PC-3 (cell line): ENCODE measurements at regions of chr15 and their contacts with region 1.

Region 1: DNA sequence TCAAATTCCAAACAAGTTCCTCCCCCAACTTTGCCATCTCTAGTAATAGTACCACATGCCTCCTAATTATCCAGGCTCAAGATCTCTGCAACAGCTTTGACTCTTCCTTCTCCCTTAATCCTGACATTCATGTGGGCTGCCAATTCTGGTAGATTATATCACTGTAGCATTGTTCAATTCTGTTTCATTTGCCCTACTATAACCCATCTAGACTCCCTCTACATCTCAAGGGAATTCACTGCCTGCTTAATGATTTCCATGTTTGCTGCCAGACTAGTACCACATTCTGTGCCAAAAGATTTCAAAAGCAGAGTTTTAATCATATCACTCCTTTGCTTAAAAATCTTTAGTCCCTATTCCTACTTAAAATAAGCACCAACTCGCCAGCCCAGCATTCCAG is 34.6 kb upstream of the PPIB start:
- DNase-seq: no peak
- ATAC-seq: no peak
- H3K4me3 ChIP-seq: no peak overlapping the region
- H3K27ac ChIP-seq: no peak overlapping the region
- H3K4me1 ChIP-seq: no peaks in the 10 kb centered on the region
- H3K27me3 ChIP-seq: no peaks in the 10 kb centered on the region
- CTCF ChIP-seq: no peak

Region 2: DNA sequence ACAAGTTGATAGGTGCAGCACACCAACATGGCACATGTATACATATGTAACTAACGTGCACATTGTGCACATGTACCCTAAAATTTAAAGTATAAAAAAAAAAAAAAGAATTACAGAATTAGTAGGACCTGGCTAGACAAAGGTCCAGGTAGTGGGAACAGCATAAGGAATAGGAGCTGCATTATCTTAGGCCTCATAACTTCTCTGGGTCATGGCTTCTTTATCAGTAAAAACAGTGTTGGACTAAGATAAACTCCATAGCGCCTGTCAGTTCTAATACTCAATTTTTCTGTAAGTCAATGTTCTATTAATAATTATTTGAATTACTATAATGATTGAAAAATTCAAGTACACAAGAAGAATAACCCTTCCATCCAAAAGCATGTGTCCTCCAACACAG is 462.0 kb before region 1 on chr15:
- CTCF ChIA-PET with region 1: no interaction called
- POLR2A ChIA-PET with region 1: no interaction called
- intact Hi-C with region 1: no loop called
- DNase-seq: no peak
- ATAC-seq: no peak
- H3K4me3 ChIP-seq: no peak overlapping the region
- H3K27ac ChIP-seq: no peak overlapping the region
- H3K4me1 ChIP-seq: no peaks in the 10 kb centered on the region
- H3K27me3 ChIP-seq: no peaks in the 10 kb centered on the region
- CTCF ChIP-seq: no peak

Region 3: DNA sequence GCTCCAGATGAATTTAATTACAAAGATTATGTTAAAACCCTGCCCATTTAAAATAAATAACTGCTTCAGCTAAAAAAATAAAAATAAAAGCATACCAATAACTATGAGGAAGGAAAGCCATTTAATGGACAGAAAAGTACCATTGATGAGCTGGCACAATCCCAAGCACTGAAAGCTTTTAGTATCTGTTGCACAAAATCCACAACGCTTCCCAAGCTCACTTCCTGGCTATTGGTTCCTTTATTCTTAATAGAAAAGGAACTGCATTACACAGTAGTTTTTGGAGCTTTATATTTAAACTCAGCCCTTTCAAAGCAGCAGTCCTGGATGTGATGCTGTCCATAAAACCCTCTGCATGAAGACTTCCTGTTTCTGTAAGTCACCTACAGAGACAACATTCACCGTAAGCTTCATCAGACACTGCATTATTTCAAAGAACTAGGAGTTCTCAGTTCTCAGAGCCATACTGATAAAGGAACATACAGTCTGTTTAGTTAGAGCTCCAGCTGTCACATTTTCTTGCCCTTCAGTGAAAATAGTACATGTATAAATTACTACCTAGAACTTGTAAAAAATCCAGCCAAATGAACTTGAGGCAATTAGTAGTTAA is 77.0 kb after region 1 on chr15:
- CTCF ChIA-PET with region 1: no interaction called
- POLR2A ChIA-PET with region 1: no interaction called
- intact Hi-C with region 1: no loop called
- DNase-seq: no peak
- ATAC-seq: no peak
- H3K4me3 ChIP-seq: no peak overlapping the region
- H3K27ac ChIP-seq: no peak overlapping the region
- H3K4me1 ChIP-seq: no peaks in the 10 kb centered on the region
- H3K27me3 ChIP-seq: no peaks in the 10 kb centered on the region
- CTCF ChIP-seq: no peak

Region 4: GRCh38 chr15:64681424-64682024 is 484.1 kb after region 1 on chr15:
- CTCF ChIA-PET with region 1: no interaction called
- POLR2A ChIA-PET with region 1: no interaction called
- intact Hi-C with region 1: no loop called
- DNase-seq: peak; percentile 77
- ATAC-seq: peak; percentile 97
- H3K4me3 ChIP-seq: no peak overlapping the region
- H3K27ac ChIP-seq: no peak overlapping the region
- H3K4me1 ChIP-seq: no peaks in the 10 kb centered on the region
- H3K27me3 ChIP-seq: no peaks in the 10 kb centered on the region
- CTCF ChIP-seq: peak; percentile 87

Region 5: DNA sequence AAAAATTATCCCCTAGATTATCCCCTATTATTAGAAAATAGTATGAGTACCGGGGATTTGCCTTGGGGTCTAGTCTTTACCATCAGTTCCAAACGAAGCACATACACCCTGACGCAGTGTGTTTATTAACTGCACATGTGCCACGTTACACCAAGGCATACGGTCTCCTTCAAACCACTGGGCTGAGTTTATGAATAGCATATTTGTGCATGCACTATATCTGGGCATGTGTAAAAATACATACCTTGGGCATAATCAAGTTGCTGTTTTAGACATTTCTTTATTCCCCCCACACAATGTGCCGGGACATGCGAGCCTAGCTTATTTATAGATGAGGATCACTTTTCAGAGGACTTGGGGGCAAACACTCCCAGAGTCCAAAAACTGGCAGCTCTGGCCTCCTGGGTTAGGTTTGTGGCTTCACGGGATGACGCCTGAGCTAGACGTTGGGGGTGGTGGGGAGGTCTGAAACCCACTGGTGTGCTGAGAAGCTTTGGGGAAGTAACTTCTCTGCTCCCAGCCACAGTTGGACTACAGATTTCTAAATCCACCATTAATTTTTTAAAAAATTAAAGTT is 1209.1 kb after region 1 on chr15:
- CTCF ChIA-PET with region 1: no interaction called
- POLR2A ChIA-PET with region 1: interaction called, 14 read pairs
- intact Hi-C with region 1: no loop called
- DNase-seq: no peak
- ATAC-seq: no peak
- H3K4me3 ChIP-seq: no peak overlapping the region
- H3K27ac ChIP-seq: no peak overlapping the region
- H3K4me1 ChIP-seq: peaks cover 17% of the 10 kb centered on the region
- H3K27me3 ChIP-seq: no peaks in the 10 kb centered on the region
- CTCF ChIP-seq: no peak